MCF 10A (cell line): ENCODE measurements at regions of chr1 and their contacts with region 1.

Region 1: GRCh38 chr1:212791676-212792395 is at the starts of genes NSL1 and TATDN3:
- DNase-seq: peak; percentile 98
- H3K4me3 Mint-ChIP-seq: peak within 1 kb of the TSS; percentile 83
- H3K27ac Mint-ChIP-seq: peak within 1 kb of the TSS; percentile 90
- H3K4me1 Mint-ChIP-seq: peaks cover 19% of the 10 kb centered on the region
- H3K27me3 Mint-ChIP-seq: no peaks in the 10 kb centered on the region
- CTCF ChIP-seq: no peak
- total RNA-seq, gene NSL1: 39.7 and 42.2 TPM in 2 replicates
- total RNA-seq, gene TATDN3: 31.5 and 35.7 TPM in 2 replicates

Region 2: GRCh38 chr1:212432706-212433576 is 358.9 kb before region 1 on chr1 and contains the start of gene NENF:
- CTCF ChIA-PET with region 1: interaction called, 3 read pairs
- POLR2A ChIA-PET with region 1: interaction called, 12 read pairs
- intact Hi-C with region 1: no loop called
- DNase-seq: peak; percentile 96
- H3K4me3 Mint-ChIP-seq: peak within 1 kb of the TSS; percentile 78
- H3K27ac Mint-ChIP-seq: peak within 1 kb of the TSS; percentile 81
- H3K4me1 Mint-ChIP-seq: peaks cover 43% of the 10 kb centered on the region
- H3K27me3 Mint-ChIP-seq: no peaks in the 10 kb centered on the region
- CTCF ChIP-seq: no peak
- total RNA-seq, gene NENF: 110 and 122 TPM in 2 replicates

Region 3: GRCh38 chr1:212595787-212596714 is 195.8 kb before region 1 on chr1:
- CTCF ChIA-PET with region 1: interaction called, 4 read pairs
- POLR2A ChIA-PET with region 1: interaction called, 17 read pairs
- intact Hi-C with region 1: no loop called
- DNase-seq: peak; percentile 97
- H3K4me3 Mint-ChIP-seq: peak overlapping the region; percentile 69
- H3K27ac Mint-ChIP-seq: peak overlapping the region; percentile 100
- H3K4me1 Mint-ChIP-seq: peaks cover 27% of the 10 kb centered on the region
- H3K27me3 Mint-ChIP-seq: peaks cover 30% of the 10 kb centered on the region
- CTCF ChIP-seq: peak; percentile 97

Region 4: GRCh38 chr1:212749821-212750535 is 41.9 kb before region 1 on chr1:
- CTCF ChIA-PET with region 1: interaction called, 15 read pairs
- POLR2A ChIA-PET with region 1: interaction called, 24 read pairs
- intact Hi-C with region 1: no loop called
- DNase-seq: peak; percentile 90
- H3K4me3 Mint-ChIP-seq: peak overlapping the region; percentile 7
- H3K27ac Mint-ChIP-seq: peak overlapping the region; percentile 46
- H3K4me1 Mint-ChIP-seq: peaks cover 19% of the 10 kb centered on the region
- H3K27me3 Mint-ChIP-seq: no peaks in the 10 kb centered on the region
- CTCF ChIP-seq: peak; percentile 96

Region 5: DNA sequence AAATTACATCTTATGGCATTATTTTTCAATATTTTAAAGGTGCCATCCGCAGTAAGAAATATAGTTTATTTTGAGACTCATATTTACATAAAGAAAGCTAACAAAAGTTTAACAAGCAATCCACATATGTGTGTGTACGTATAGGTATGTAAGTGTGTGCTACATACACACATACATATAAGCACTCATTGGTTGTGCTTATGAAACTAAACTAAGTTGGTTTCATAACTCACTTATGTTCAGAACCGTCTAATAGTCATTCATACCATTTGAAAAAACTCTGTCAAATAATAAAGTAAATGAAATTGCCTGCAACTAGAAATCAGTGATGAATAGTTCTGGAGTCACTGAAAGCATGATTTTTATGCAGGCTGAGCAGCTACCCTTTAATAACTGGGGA is 13.9 kb after region 1 on chr1:
- CTCF ChIA-PET with region 1: interaction called, 13 read pairs
- POLR2A ChIA-PET with region 1: interaction called, 34 read pairs
- intact Hi-C with region 1: no loop called
- DNase-seq: no peak
- H3K4me3 Mint-ChIP-seq: no peak overlapping the region
- H3K27ac Mint-ChIP-seq: no peak overlapping the region
- H3K4me1 Mint-ChIP-seq: no peaks in the 10 kb centered on the region
- H3K27me3 Mint-ChIP-seq: no peaks in the 10 kb centered on the region
- CTCF ChIP-seq: no peak

Region 6: DNA sequence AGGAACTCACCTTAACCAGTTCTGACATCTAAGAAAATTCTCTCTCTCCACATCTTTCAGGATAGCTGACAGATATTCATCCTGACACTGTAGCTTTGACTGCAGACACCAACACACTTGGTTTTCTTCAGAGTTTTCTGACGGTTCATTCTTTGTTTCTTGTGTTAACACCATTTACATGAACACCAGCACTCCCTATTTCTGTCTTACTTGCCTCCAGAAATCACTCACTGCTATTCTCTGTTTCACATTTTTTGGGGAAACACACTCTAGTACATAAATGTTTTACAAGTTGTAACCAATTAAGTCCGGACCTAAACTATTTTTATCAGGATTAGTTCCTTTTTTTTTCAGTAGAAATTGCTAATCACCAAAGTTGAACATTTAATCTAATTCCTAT is 81.7 kb after region 1 on chr1:
- CTCF ChIA-PET with region 1: interaction called, 3 read pairs
- POLR2A ChIA-PET with region 1: interaction called, 21 read pairs
- intact Hi-C with region 1: no loop called
- DNase-seq: no peak
- H3K4me3 Mint-ChIP-seq: no peak overlapping the region
- H3K27ac Mint-ChIP-seq: peak overlapping the region; percentile 7
- H3K4me1 Mint-ChIP-seq: peaks cover 17% of the 10 kb centered on the region
- H3K27me3 Mint-ChIP-seq: no peaks in the 10 kb centered on the region
- CTCF ChIP-seq: no peak

Region 7: DNA sequence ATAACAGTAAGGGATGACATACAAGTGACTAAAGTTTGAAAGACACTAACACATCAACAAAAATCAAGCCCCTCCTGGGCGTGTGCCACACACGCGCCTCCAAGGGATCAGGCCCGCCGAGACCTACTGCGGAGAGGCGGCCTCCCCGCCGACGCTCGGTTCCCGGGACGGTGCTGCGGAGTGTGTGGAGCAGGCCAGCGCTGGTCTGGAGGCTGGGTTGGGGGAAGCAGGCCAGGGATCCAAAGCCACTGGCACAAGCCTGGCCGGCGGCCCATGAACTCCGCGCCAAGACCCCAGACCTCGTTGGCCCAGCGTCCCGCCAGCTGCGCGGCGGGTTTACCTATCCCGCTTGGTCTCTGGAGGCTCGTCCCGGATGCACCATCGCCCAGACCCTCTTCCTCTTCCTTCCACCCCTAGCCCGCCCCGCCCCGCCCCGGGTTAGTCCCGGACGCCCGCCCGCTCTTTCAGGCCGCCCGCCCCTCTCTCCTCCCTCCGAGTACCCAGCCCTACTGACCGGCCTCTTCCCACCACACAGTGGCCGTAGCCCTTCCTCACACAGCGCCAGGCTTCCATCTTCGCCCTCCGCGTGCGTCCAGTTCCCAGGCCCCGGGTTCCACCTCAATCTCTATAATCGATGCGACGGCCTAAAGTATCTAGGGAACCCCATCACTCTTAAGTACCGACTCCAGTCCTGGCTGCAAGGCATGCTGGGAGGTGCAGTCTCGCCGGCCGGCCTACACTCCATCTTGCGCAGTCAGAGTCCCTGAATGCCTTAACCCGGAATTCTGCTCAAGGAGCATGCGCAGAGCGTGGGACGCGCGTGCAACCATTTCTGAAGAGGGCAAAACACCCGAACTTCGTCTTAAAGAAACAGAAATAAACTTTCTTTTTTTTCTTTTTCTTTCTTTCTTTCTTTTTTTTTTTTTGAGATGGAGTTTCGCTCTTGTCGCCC is 223.5 kb after region 1 on chr1 and contains the start of gene ANGEL2:
- CTCF ChIA-PET with region 1: no interaction called
- POLR2A ChIA-PET with region 1: interaction called, 14 read pairs
- intact Hi-C with region 1: no loop called
- DNase-seq: peak; percentile 100
- H3K4me3 Mint-ChIP-seq: peak within 1 kb of the TSS; percentile 91
- H3K27ac Mint-ChIP-seq: peak within 1 kb of the TSS; percentile 84
- H3K4me1 Mint-ChIP-seq: peaks cover 13% of the 10 kb centered on the region
- H3K27me3 Mint-ChIP-seq: no peaks in the 10 kb centered on the region
- CTCF ChIP-seq: no peak
- total RNA-seq, gene ANGEL2: 87.1 and 89.7 TPM in 2 replicates